K562 (cell line): ENCODE measurements at regions of chr1 and their contacts with region 1.

Region 1: DNA sequence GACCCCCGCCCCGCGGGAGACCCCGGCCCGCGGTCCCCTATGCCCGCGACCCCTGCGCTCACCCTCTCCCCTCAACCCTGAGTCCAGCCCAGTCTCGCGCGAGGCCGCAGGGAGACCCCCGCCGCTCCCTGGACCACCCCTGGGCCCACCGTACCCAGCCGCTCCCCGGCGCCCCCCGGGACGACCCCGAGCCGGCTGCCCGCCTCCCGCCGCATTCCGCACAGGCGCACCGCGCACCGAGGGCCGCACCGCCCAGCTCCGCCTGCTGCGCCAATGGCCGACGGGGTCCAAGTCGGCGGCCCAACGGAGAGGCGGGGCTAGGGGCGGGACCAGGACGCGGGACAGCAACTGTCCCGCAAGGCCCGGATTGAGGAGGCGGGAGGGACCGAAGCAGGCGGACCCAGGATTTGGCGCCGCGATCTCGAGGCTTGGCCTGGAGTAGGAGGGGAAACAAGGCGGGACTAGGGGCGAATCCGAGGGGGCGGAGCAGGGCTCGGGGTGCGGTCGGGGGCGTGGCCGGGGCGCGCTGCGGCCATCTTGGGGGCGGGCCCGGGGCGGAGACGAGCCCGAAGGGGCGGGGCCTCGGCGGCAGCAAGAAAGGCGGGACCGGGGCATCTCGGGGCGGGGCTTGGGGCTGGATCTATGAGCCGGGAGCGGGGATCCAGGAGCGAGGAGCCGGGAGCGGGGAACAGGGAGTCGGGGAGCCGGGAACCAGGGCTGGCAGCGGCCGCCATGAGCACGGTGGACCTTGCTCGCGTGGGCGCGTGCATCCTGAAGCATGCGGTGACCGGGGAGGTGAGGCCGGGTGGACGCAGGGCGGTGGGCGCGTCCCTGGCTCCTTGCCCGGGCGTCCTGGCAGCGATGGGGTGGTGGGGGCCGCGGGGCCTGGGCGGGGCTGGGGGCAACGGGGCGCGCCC is at the start of gene PRXL2B:
- DNase-seq: peak; percentile 99 to 100 (median 99)
- ATAC-seq: peak; percentile 95
- H3K4me3 ChIP-seq: peak within 1 kb of the TSS; percentile 71
- H3K27ac ChIP-seq: peak within 1 kb of the TSS; percentile 93
- H3K4me1 ChIP-seq: peaks cover 20 to 57% of the 10 kb centered on the region in 2 experiments
- H3K27me3 ChIP-seq: peaks cover 5 to 6% of the 10 kb centered on the region in 2 experiments; a peak in 4 of 5 replicates
- CTCF ChIP-seq: no peak
- EP300 ChIP-seq: no peak; the same call in 1 of the 2 replicates
- POLR2A ChIP-seq: peak; percentile 76
- RAD21 ChIP-seq: no peak
- polyA plus RNA-seq, gene PRXL2B: 0.99 to 1.7 TPM

Region 2: GRCh38 chr1:2360588-2361364 is 225.6 kb before region 1 on chr1:
- CTCF ChIA-PET with region 1: no interaction called
- POLR2A ChIA-PET with region 1: no interaction called
- in situ Hi-C with region 1: no loop called
- intact Hi-C with region 1: no loop called
- DNase-seq: no peak
- ATAC-seq: no peak
- H3K4me3 ChIP-seq: no peak overlapping the region
- H3K27ac ChIP-seq: no peak overlapping the region
- H3K4me1 ChIP-seq: peaks cover 0 to 11% of the 10 kb centered on the region in 2 experiments; a peak in 1 of 5 replicates
- H3K27me3 ChIP-seq: peaks cover 49 to 55% of the 10 kb centered on the region in 2 experiments
- CTCF ChIP-seq: no peak
- EP300 ChIP-seq: no peak
- POLR2A ChIP-seq: no peak
- RAD21 ChIP-seq: no peak

Region 3: DNA sequence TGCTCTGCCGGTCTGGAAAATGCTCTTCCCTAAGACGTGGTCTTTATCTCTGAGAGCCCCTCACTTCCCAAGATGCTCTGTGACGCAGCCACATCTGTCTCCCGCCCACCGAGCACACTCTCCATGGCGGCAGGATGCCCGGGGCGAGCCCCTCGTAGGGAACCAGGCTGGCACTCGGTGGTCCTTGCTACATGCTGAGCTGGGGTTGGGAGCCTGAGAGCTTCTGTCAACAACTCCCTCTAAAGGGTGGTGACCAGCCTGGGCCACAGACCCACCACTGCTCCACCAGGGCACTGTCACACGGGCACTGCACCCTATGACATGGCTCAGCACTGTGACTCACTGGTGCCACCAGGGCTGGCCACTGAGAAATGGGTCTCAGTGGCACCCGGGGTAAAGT is 176.7 kb before region 1 on chr1:
- CTCF ChIA-PET with region 1: no interaction called
- POLR2A ChIA-PET with region 1: no interaction called
- in situ Hi-C with region 1: no loop called
- intact Hi-C with region 1: no loop called
- DNase-seq: no peak
- ATAC-seq: no peak
- H3K4me3 ChIP-seq: no peak overlapping the region
- H3K27ac ChIP-seq: no peak overlapping the region
- H3K4me1 ChIP-seq: peaks cover 15 to 83% of the 10 kb centered on the region in 2 experiments
- H3K27me3 ChIP-seq: no peaks in the 10 kb centered on the region
- CTCF ChIP-seq: no peak
- EP300 ChIP-seq: no peak
- POLR2A ChIP-seq: no peak
- RAD21 ChIP-seq: no peak

Region 4: DNA sequence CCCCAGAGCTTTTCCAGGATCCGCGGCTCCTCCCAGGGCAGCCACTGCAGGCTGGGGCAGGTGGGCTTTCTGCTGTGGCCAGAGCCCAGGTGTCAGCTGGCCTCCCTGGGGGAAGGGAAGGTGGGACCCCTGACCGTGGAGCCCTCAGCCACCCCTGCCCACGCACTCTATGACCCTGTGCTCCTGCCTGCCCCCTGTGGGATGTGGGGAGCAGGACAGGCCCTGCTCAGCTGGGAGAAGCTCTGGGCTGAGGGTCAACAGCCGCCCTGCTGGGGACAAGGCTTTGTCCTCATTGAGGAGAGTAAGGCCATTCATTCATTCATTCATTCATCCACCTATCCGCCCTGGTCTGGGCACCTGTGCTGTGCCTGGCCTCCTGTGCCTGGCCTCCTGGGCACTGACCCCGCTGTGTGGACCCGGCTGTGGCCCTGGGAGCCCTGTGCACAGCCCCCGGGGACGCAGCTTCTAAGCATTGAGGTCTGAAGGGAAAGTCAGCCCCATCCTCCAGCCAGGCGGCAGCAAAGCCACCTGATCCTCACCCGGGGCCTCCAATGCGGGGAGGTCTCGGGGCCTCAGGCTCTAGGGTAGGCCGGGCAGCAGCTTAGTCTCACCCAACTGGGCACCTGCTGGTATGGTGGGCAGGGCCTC is 24.4 kb before region 1 on chr1:
- CTCF ChIA-PET with region 1: interaction called, 3 read pairs
- POLR2A ChIA-PET with region 1: interaction called, 13 read pairs
- in situ Hi-C with region 1: no loop called
- intact Hi-C with region 1: no loop called
- DNase-seq: peak; percentile 56 to 69 (median 64)
- ATAC-seq: peak; percentile 77
- H3K4me3 ChIP-seq: no peak overlapping the region
- H3K27ac ChIP-seq: no peak overlapping the region
- H3K4me1 ChIP-seq: peaks cover 10 to 73% of the 10 kb centered on the region in 2 experiments; a peak in 4 of 5 replicates
- H3K27me3 ChIP-seq: peaks cover 21 to 38% of the 10 kb centered on the region in 2 experiments
- CTCF ChIP-seq: peak; percentile 64 to 77 (median 67)
- EP300 ChIP-seq: no peak
- POLR2A ChIP-seq: no peak
- RAD21 ChIP-seq: peak in 1 of 2 experiments; percentile 40; a peak in 1 of 4 replicates

Region 5: DNA sequence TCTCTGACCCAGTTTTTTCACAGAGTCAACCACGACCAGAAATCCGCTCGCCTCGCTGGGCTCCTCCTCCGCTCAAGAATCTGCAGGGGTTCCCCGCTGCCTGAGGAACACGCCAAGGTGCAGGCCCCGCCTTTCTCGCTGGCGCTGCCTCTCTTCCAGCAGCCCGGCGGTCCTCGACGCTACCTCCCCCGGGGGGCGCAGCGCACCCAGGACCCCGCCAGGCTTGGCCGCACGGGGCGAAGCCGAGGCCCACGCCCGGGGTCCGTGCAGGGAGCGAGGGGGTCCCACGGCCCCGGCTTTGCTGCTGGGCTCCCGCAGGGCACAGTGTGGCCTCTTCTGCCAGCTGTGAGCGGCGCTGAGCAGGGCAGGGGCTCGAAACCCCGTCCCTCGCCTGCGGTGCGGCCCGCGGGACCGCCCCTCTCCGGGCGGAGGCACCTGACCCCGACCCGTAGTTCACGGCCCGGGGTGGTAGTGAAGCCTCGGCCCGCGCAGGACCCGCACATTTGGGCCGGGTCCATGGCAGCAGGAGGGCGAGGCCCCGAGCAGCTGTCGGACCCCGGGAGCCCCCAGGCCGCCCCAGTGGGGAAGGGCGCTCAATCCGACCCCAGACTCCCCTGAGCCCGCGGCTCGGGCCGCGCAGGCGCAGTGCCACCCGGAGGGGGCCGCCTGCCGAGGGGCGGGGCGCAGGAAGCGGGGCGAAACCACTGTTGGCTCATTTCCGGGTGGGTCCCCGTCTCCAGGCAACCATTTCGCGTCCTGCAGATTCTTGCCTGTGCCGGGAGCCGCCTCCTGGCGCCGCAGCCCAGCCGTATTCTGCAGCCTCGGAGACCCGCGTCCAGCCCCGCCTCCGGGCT is 56.4 kb after region 1 on chr1:
- CTCF ChIA-PET with region 1: no interaction called
- POLR2A ChIA-PET with region 1: interaction called, 3 read pairs
- in situ Hi-C with region 1: no loop called
- intact Hi-C with region 1: loop called (anchors 2 kb)
- DNase-seq: peak; percentile 94 to 100 (median 100)
- ATAC-seq: peak; percentile 93
- H3K4me3 ChIP-seq: peak overlapping the region; percentile 66
- H3K27ac ChIP-seq: peak overlapping the region; percentile 76
- H3K4me1 ChIP-seq: peaks cover 0 to 37% of the 10 kb centered on the region in 2 experiments; a peak in 2 of 5 replicates
- H3K27me3 ChIP-seq: peaks cover 0 to 12% of the 10 kb centered on the region in 2 experiments; a peak in 2 of 5 replicates
- CTCF ChIP-seq: peak; percentile 8 to 23 (median 13); a peak in 3 of 6 replicates
- EP300 ChIP-seq: no peak
- POLR2A ChIP-seq: peak; percentile 78
- RAD21 ChIP-seq: no peak